Mammary epithelial cell (primary cell): ENCODE measurements at regions of chr14 and their contacts with region 1.

Region 1: GRCh38 chr14:55270832-55271565 is at the start of gene FBXO34:
- DNase-seq: peak; percentile 97
- H3K4me3 ChIP-seq: peak within 1 kb of the TSS; percentile 88 to 100 (median 96)
- H3K27ac ChIP-seq: peak within 1 kb of the TSS; percentile 93
- H3K4me1 ChIP-seq: peaks cover 24% of the 10 kb centered on the region
- H3K27me3 ChIP-seq: no peaks in the 10 kb centered on the region
- CTCF ChIP-seq: peak; percentile 96 to 100
- total RNA-seq, gene FBXO34: 16.1 to 30.8 TPM

Region 2: GRCh38 chr14:55062517-55063351 is 208.3 kb before region 1 on chr14:
- CTCF ChIA-PET with region 1: no interaction called
- dilution Hi-C with region 1: no loop called
- in situ Hi-C with region 1: no loop called
- intact Hi-C with region 1: no loop called
- DNase-seq: no peak
- H3K4me3 ChIP-seq: no peak overlapping the region
- H3K27ac ChIP-seq: no peak overlapping the region
- H3K4me1 ChIP-seq: no peaks in the 10 kb centered on the region
- H3K27me3 ChIP-seq: no peaks in the 10 kb centered on the region
- CTCF ChIP-seq: no peak

Region 3: GRCh38 chr14:55212634-55213033 is 58.4 kb before region 1 on chr14:
- CTCF ChIA-PET with region 1: no interaction called
- dilution Hi-C with region 1: no loop called
- in situ Hi-C with region 1: no loop called
- intact Hi-C with region 1: loop called (anchors 1 kb)
- DNase-seq: peak; percentile 74
- H3K4me3 ChIP-seq: peak overlapping the region in 2 of 3 experiments; percentile 31 to 39
- H3K27ac ChIP-seq: peak overlapping the region; percentile 80
- H3K4me1 ChIP-seq: peaks cover 13% of the 10 kb centered on the region
- H3K27me3 ChIP-seq: no peaks in the 10 kb centered on the region
- CTCF ChIP-seq: no peak

Region 4: DNA sequence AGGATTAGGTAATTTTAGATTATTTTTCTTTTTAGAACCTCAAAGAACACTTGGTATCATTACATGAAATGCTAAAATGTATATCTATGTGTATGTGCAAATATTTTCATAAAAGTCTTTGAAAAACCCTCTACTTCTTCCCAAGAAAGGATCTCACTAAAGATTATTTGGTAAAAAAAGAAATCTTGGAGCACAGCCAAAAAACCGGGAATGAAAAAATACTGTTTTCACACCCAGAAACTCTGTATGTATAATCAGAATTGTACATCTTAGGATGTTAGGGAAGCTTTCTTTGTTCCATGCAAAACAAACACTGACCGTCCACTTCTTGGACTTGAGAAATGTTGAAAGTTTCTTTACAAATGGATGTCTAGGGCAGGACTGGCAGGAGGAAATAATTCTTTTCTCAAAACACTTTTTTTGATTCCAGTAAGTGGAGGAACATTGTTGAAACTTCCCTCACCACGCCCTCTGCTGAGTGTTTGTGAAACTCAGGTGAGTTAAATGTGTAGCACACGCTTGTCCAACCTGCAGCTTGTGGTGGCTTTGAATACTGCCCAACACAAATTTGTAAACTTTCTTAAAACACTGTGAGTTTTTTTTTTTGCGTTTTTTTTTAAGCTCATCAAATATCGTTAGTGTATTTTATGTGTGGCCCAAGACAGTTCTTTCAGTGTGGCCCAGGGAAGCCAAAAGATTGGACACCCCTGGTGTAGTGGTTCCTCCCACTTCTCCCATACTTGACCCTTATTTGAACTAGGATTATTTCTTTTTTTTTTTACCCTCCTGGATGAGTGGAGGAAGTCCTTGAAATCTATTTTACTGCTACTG is 26.8 kb after region 1 on chr14:
- CTCF ChIA-PET with region 1: no interaction called
- dilution Hi-C with region 1: no loop called
- in situ Hi-C with region 1: no loop called
- intact Hi-C with region 1: loop called (anchors 1 kb)
- DNase-seq: peak; percentile 67
- H3K4me3 ChIP-seq: peak overlapping the region in 2 of 3 experiments; percentile 22 to 36
- H3K27ac ChIP-seq: peak overlapping the region; percentile 41
- H3K4me1 ChIP-seq: peaks cover 26% of the 10 kb centered on the region
- H3K27me3 ChIP-seq: no peaks in the 10 kb centered on the region
- CTCF ChIP-seq: peak; percentile 24 to 50

Region 5: GRCh38 chr14:55348766-55349453 is 77.9 kb after region 1 on chr14:
- CTCF ChIA-PET with region 1: interaction called, 16 read pairs
- dilution Hi-C with region 1: loop called (anchors 5 kb)
- in situ Hi-C with region 1: no loop called
- intact Hi-C with region 1: loop called (anchors 1 kb)
- DNase-seq: peak; percentile 70
- H3K4me3 ChIP-seq: no peak overlapping the region
- H3K27ac ChIP-seq: no peak overlapping the region
- H3K4me1 ChIP-seq: peaks cover 8% of the 10 kb centered on the region
- H3K27me3 ChIP-seq: no peaks in the 10 kb centered on the region
- CTCF ChIP-seq: no peak

Region 6: GRCh38 chr14:55411426-55412389 is 140.7 kb after region 1 on chr14 and contains the start of gene ATG14:
- CTCF ChIA-PET with region 1: interaction called, 3 read pairs
- dilution Hi-C with region 1: no loop called
- in situ Hi-C with region 1: no loop called
- intact Hi-C with region 1: loop called (anchors 5 kb)
- DNase-seq: peak; percentile 77
- H3K4me3 ChIP-seq: peak within 1 kb of the TSS; percentile 92 to 99 (median 97)
- H3K27ac ChIP-seq: peak within 1 kb of the TSS; percentile 87
- H3K4me1 ChIP-seq: peaks cover 18% of the 10 kb centered on the region
- H3K27me3 ChIP-seq: no peaks in the 10 kb centered on the region
- CTCF ChIP-seq: no peak
- total RNA-seq, gene ATG14: 5.6 to 11.2 TPM

Region 7: DNA sequence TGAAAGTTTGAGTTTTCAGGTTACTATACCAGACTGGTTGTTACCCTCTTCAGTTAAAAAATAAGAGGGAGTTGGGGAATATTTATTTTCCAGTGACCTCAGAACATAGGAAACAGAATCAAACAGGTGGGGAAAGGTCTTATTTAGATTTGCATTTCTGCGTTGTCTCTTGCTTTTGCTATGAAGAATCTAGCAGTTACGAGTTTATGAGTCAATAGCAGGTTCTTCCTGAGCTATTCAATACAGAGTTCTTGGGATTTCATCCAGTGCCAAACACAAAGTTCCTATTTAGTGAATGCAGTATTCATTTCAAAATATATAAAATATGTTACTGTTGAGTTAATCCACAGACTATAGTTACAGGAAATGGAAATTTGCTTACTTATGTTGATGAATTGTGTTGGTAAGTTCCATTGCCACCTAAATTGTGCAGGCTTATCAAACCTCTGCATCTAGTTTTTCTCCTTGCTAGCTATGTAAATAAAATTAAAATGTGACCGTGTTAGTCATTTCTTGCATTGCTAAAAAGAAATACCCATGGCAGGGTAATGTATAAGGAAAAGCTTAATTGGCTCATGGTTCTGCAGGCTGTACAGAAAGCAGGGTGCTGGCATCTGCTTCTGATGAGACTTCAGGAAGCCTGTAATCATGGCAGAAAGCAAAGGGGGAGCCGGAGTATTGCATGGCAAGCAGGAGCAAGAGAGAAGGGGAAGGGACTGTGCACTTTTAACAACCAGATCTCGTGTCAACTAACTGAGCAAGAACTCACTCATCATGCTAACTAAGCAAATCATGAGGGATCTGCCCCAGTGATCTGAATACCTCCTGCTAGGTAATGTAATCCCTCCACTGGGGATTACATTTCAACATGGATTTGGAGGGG is 419.2 kb after region 1 on chr14:
- CTCF ChIA-PET with region 1: no interaction called
- dilution Hi-C with region 1: no loop called
- in situ Hi-C with region 1: no loop called
- intact Hi-C with region 1: no loop called
- DNase-seq: no peak
- H3K4me3 ChIP-seq: no peak overlapping the region
- H3K27ac ChIP-seq: no peak overlapping the region
- H3K4me1 ChIP-seq: no peaks in the 10 kb centered on the region
- H3K27me3 ChIP-seq: no peaks in the 10 kb centered on the region
- CTCF ChIP-seq: no peak